GM12878 (cell line): ENCODE measurements at regions of chr18 and their contacts with region 1.

Region 1: DNA sequence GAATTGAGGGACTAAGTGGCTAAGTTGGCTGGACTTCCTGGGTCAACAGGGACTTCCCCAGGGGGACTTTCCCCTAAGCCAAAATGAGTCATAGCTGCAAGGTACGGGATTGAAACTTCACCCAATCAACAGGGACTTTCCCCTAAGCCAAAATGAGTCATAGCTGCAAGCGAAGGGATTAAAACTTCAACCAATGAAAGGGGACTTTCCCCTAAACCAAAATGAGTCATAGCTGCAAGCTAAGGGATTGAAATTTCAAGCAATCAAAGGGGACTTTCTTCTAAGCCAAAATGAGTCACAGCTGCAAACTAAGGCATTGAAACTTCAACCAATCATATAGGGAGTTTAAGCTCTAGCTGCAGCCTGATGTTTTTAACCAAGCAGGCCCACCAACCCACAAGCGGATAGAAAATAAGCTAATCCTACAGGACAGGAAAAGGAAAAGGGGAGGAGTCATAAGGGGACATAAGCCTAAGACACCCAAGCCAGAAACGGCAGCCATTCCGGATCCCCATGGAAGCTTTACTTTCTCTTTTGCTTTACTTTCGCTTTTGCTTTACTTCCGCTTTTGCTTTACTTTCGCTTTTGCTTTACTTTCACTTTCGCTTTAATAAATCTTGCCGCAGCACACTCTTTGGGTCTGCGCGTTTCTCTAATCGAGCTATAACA is 1375.4 kb upstream of the CELF4 start:
- DNase-seq: peak; percentile 99
- ATAC-seq: peak; percentile 88
- H3K4me3 ChIP-seq: peak overlapping the region; percentile 46; the same call in 1 of the 2 replicates
- H3K27ac ChIP-seq: peak overlapping the region; percentile 84
- H3K4me1 ChIP-seq: peaks cover 8% of the 10 kb centered on the region
- H3K27me3 ChIP-seq: no peaks in the 10 kb centered on the region
- CTCF ChIP-seq: no peak
- EP300 ChIP-seq: peak; percentile 95 to 97
- POLR2A ChIP-seq: no peak
- RAD21 ChIP-seq: peak; percentile 23; the same call in 1 of the 2 replicates

Region 2: DNA sequence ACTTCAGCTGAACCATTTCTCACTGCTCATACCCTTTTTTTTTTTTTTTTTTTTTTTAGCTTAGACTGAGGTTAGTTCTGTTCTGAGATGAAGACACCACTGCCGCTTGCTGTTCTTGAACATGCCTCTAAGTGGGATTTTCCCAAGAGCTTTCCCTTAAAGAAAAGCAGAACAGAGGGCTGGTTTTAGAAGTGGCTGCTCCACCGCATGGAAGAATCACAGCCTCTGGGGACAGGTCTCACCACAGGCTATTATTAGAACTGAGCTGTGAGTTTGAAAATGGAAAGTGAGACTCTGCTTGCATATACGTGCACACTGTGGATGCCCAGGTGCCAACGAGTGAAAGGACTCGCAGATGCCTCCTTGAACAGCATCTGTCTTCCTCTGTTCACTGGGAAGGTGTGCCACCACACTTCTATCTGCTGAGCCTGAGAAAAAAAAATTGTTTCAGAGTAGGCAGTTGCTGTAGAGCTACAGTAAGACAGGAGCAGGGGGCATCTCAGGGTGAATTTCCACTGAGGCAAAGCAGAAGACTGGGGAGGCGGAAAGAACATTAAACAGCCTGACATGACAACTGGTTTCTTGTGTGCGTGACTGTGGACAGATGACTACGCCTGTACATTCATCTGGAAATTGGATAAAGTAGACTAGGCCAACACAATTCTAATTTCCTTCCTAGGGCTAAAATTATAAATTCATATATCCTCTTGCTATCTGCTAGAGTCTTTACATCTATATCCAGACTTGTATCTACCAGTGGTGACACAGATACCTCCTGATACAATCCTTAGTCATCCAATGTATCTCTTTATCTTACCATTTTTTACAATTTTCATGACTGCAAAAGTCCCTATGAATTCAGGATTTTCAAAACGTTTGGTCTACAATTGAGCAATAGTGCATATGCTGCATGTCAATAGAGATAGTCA is 329.7 kb before region 1 on chr18:
- CTCF ChIA-PET with region 1: interaction called, 3 read pairs
- POLR2A ChIA-PET with region 1: interaction called, 4 read pairs
- RAD21 ChIA-PET with region 1: interaction called, 4 read pairs
- SMC1A ChIA-PET with region 1: interaction called, 7 read pairs
- in situ Hi-C with region 1: loop called (anchors 5 kb)
- intact Hi-C with region 1: loop called (anchors 1 kb)
- DNase-seq: peak; percentile 94
- ATAC-seq: peak; percentile 92
- H3K4me3 ChIP-seq: no peak overlapping the region; the same call in 1 of the 2 replicates
- H3K27ac ChIP-seq: peak overlapping the region; percentile 78
- H3K4me1 ChIP-seq: peaks cover 35% of the 10 kb centered on the region
- H3K27me3 ChIP-seq: no peaks in the 10 kb centered on the region
- CTCF ChIP-seq: no peak; a peak in 1 of 6 replicates
- EP300 ChIP-seq: peak; percentile 49 to 75; a peak in 3 of 4 replicates
- POLR2A ChIP-seq: no peak
- RAD21 ChIP-seq: peak; percentile 54

Region 3: GRCh38 chr18:38751898-38752297 is 189.1 kb before region 1 on chr18:
- CTCF ChIA-PET with region 1: no interaction called
- POLR2A ChIA-PET with region 1: no interaction called
- RAD21 ChIA-PET with region 1: no interaction called
- SMC1A ChIA-PET with region 1: no interaction called
- in situ Hi-C with region 1: no loop called
- intact Hi-C with region 1: loop called (anchors 5 kb)
- DNase-seq: no peak
- ATAC-seq: peak; percentile 56
- H3K4me3 ChIP-seq: no peak overlapping the region
- H3K27ac ChIP-seq: no peak overlapping the region
- H3K4me1 ChIP-seq: peaks cover 12% of the 10 kb centered on the region
- H3K27me3 ChIP-seq: no peaks in the 10 kb centered on the region
- CTCF ChIP-seq: no peak
- EP300 ChIP-seq: no peak
- POLR2A ChIP-seq: no peak
- RAD21 ChIP-seq: no peak

Region 4: DNA sequence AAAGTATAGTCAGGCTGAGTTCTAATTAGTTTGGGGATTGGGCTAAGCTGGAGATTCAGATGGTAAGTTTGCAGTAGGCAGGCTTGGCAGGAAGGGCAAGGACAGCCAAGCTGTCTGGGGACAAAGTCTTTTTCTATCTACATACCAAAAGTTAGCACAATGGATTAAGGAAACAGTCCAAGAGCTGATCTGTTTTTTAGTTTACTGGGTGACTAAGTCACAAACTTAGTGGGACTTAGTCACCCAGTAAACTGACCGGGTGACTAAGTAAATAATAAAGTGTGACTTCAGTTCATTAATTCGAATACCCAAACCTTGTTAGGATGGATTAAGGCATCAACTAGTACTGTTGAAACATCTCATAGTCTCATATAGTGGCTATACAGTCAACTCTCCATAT is 10.6 kb after region 1 on chr18:
- CTCF ChIA-PET with region 1: interaction called, 4 read pairs
- POLR2A ChIA-PET with region 1: interaction called, 6 read pairs
- RAD21 ChIA-PET with region 1: interaction called, 15 read pairs
- SMC1A ChIA-PET with region 1: interaction called, 9 read pairs
- in situ Hi-C with region 1: no loop called
- intact Hi-C with region 1: no loop called
- DNase-seq: no peak
- ATAC-seq: no peak
- H3K4me3 ChIP-seq: no peak overlapping the region
- H3K27ac ChIP-seq: no peak overlapping the region
- H3K4me1 ChIP-seq: no peaks in the 10 kb centered on the region
- H3K27me3 ChIP-seq: no peaks in the 10 kb centered on the region
- CTCF ChIP-seq: no peak
- EP300 ChIP-seq: no peak
- POLR2A ChIP-seq: no peak
- RAD21 ChIP-seq: no peak

Region 5: DNA sequence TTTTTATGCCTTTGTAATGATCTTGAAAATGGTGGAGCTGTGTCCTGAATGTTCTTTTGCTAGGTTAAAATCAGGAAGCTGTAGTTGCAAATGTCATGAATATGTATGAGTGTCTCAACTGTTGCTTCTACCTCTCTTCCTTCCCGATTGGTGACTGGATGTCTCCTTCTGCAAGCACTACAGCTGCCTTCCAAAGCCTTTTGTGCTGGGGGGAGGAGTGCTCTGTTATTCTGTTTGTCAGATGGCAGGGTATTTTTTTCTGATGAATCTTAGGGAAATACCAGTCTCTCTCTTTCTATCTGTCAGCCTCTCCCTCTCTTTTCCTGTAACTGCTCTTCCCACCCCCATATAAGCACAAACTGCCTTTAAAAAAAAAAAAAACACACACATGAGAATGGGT is 20.9 kb after region 1 on chr18:
- CTCF ChIA-PET with region 1: interaction called, 6 read pairs
- POLR2A ChIA-PET with region 1: no interaction called
- RAD21 ChIA-PET with region 1: interaction called, 4 read pairs
- SMC1A ChIA-PET with region 1: interaction called, 29 read pairs
- in situ Hi-C with region 1: no loop called
- intact Hi-C with region 1: no loop called
- DNase-seq: no peak
- ATAC-seq: peak; percentile 55
- H3K4me3 ChIP-seq: no peak overlapping the region
- H3K27ac ChIP-seq: no peak overlapping the region
- H3K4me1 ChIP-seq: no peaks in the 10 kb centered on the region
- H3K27me3 ChIP-seq: no peaks in the 10 kb centered on the region
- CTCF ChIP-seq: no peak
- EP300 ChIP-seq: no peak
- POLR2A ChIP-seq: no peak
- RAD21 ChIP-seq: no peak

Region 6: DNA sequence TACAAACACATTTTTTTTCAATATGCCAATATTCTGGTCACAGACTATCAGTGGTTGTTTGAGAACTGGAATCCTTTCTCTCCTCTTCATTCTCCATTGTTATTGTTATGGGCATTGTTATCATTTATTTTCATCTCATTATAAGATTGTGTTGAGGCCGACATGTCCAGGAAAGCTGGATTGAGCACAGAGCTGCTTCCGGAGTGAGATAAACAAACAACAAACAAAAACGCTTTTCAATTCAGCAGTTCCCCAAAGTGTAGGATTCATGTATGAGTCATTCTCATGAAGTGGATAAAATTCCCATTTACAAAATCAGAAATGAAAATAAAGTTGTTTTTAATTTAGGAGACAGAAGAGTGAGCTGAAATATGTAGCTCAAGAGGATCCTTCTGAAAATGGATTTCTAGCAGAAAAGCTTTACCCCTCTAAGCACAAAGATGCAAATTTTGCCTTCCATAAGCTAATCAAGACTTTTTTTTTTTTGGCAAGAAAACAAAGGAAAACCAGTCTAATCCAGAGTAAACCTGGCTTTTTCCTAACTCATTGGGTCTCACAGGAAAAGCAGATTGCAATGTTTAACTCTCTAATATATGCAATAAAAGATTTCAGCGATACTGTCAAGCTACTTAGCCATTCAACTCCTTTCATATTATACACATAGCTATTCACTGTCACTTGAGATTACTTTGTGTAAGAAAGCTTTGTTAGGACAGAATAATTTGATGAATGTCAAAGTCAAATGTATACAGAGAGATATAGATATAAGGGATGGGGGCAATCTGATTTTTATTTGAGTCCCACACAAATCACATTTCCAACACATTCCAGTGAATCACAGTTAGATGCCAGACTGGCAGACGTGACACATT is 66.3 kb after region 1 on chr18:
- CTCF ChIA-PET with region 1: no interaction called
- POLR2A ChIA-PET with region 1: no interaction called
- RAD21 ChIA-PET with region 1: no interaction called
- SMC1A ChIA-PET with region 1: no interaction called
- in situ Hi-C with region 1: no loop called
- intact Hi-C with region 1: no loop called
- DNase-seq: no peak
- ATAC-seq: no peak
- H3K4me3 ChIP-seq: no peak overlapping the region
- H3K27ac ChIP-seq: no peak overlapping the region
- H3K4me1 ChIP-seq: no peaks in the 10 kb centered on the region
- H3K27me3 ChIP-seq: no peaks in the 10 kb centered on the region
- CTCF ChIP-seq: no peak
- EP300 ChIP-seq: no peak
- POLR2A ChIP-seq: no peak
- RAD21 ChIP-seq: no peak

Region 7: GRCh38 chr18:40152859-40153258 is 1211.9 kb after region 1 on chr18:
- CTCF ChIA-PET with region 1: no interaction called
- POLR2A ChIA-PET with region 1: no interaction called
- RAD21 ChIA-PET with region 1: no interaction called
- SMC1A ChIA-PET with region 1: no interaction called
- in situ Hi-C with region 1: loop called (anchors 25 kb)
- intact Hi-C with region 1: no loop called
- DNase-seq: no peak
- ATAC-seq: no peak; the same call in 2 of the 3 replicates
- H3K4me3 ChIP-seq: no peak overlapping the region
- H3K27ac ChIP-seq: no peak overlapping the region
- H3K4me1 ChIP-seq: no peaks in the 10 kb centered on the region
- H3K27me3 ChIP-seq: no peaks in the 10 kb centered on the region
- CTCF ChIP-seq: no peak
- EP300 ChIP-seq: no peak
- POLR2A ChIP-seq: no peak
- RAD21 ChIP-seq: no peak